CD14-positive monocyte (primary cell): ENCODE measurements at regions of chr3 and their contacts with region 1.

Region 1: GRCh38 chr3:72591522-72592421 is 256.5 kb downstream of the SHQ1 start:
- DNase-seq: no peak
- H3K4me3 ChIP-seq: no peak overlapping the region
- H3K4me3 Mint-ChIP-seq: no peak overlapping the region
- H3K27ac ChIP-seq: no peak overlapping the region
- H3K27ac Mint-ChIP-seq: no peak overlapping the region
- H3K4me1 ChIP-seq: peaks cover 16 to 19% of the 10 kb centered on the region in 2 donors
- H3K4me1 Mint-ChIP-seq: peaks cover 24% of the 10 kb centered on the region
- H3K27me3 ChIP-seq: no peaks in the 10 kb centered on the region
- H3K27me3 Mint-ChIP-seq: peaks cover 0 to 2% (median 2%) of the 10 kb centered on the region in 3 donors
- CTCF ChIP-seq: no peak

Region 2: DNA sequence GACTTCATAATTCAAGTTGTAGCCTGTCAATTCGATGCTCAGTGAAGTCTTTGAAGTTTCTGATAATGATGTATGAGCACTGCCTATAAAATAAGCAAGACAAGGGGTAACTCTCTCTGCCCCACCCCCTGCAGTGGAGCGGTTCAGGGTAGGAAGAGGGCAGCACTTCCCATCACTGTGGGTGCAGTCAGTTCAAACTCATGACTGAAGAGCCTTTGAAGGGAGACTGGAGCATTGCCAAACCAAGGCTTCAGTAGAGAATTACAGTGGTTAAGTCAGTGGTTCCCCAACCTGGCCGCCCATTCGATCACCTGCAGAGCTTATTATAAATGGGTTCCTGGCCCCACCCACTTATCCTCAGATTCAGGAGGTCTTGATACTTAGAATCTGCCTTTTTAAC is 65.9 kb after region 1 on chr3:
- intact Hi-C with region 1: loop called in 1 of 2 experiments (anchors 10 kb)
- DNase-seq: peak in 1 of 3 donors; percentile 11
- H3K4me3 ChIP-seq: no peak overlapping the region
- H3K4me3 Mint-ChIP-seq: no peak overlapping the region
- H3K27ac ChIP-seq: no peak overlapping the region
- H3K27ac Mint-ChIP-seq: no peak overlapping the region
- H3K4me1 ChIP-seq: peaks cover 6 to 7% of the 10 kb centered on the region in 2 donors
- H3K4me1 Mint-ChIP-seq: peaks cover 12% of the 10 kb centered on the region
- H3K27me3 ChIP-seq: peaks cover 13 to 21% of the 10 kb centered on the region in 2 donors
- H3K27me3 Mint-ChIP-seq: peaks cover 13 to 29% (median 28%) of the 10 kb centered on the region in 3 donors
- CTCF ChIP-seq: no peak